Astrocyte of the cerebellum (primary cell): ENCODE measurements at regions of chr4 and their contacts with region 1.

Region 1: DNA sequence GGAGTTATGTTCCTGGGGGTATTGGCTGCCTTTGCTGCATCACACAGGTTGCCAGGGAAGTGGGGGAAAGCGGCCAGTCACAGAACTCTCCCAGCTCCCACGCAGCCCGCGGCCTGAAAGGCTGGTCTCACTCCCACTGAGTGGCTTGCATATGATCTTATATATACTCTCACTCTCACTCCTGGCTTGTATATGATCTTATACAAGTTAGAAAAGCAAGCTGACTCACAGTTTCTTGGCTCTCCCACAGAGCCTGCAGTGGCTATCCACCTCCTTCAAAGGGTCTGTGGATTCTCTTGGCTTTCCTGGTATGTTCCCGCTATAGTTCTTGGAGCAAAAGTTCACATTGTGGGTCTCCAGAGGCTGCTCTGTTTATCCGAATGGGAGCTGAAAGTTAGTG is 833.5 kb upstream of the GALNTL6 start:
- DNase-seq: peak; percentile 52
- H3K4me3 ChIP-seq: no peak overlapping the region
- CTCF ChIP-seq: no peak

Region 2: GRCh38 chr4:171031338-171031737 is 51.6 kb after region 1 on chr4:
- in situ Hi-C with region 1: loop called (anchors 10 kb)
- DNase-seq: no peak
- H3K4me3 ChIP-seq: no peak overlapping the region
- CTCF ChIP-seq: no peak